Activated CD4-positive, alpha-beta memory T cell treated with anti-CD3 and anti-CD28 coated beads for 36 hours (primary cell): ENCODE measurements at regions of chr22 and their contacts with region 1.

Region 1: DNA sequence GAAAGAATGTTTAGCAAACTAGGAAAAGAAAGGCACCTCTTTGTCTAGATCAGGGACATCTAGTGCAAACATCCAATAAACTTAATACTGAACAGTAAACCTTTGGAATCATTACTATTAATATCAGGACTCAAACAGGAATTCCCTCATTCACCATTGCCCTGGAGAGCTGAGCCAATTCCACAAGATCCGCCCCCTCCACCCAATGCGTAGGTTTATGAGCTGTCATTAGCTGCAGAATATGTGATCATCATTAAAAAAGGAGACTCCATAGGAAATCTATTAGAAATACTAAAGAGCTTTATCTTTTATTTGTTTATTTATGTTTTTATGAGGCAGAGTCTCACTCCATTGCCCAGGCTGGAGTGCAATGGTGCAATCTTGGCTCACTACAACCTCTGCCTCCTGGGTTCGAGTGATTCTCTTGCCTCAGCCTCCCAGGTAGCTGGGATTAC is 5.5 kb downstream of the IL17REL start:
- DNase-seq: no peak
- H3K4me3 Mint-ChIP-seq: no peak overlapping the region
- H3K27ac Mint-ChIP-seq: no peak overlapping the region
- H3K4me1 Mint-ChIP-seq: peaks cover 27% of the 10 kb centered on the region
- H3K27me3 Mint-ChIP-seq: peaks cover 7% of the 10 kb centered on the region

Region 2: GRCh38 chr22:49800408-49801238 is 206.5 kb before region 1 on chr22:
- CTCF ChIA-PET with region 1: no interaction called
- POLR2A ChIA-PET with region 1: no interaction called
- intact Hi-C with region 1: no loop called
- DNase-seq: no peak
- H3K4me3 Mint-ChIP-seq: no peak overlapping the region
- H3K27ac Mint-ChIP-seq: no peak overlapping the region
- H3K4me1 Mint-ChIP-seq: peaks cover 33% of the 10 kb centered on the region
- H3K27me3 Mint-ChIP-seq: no peaks in the 10 kb centered on the region

Region 3: DNA sequence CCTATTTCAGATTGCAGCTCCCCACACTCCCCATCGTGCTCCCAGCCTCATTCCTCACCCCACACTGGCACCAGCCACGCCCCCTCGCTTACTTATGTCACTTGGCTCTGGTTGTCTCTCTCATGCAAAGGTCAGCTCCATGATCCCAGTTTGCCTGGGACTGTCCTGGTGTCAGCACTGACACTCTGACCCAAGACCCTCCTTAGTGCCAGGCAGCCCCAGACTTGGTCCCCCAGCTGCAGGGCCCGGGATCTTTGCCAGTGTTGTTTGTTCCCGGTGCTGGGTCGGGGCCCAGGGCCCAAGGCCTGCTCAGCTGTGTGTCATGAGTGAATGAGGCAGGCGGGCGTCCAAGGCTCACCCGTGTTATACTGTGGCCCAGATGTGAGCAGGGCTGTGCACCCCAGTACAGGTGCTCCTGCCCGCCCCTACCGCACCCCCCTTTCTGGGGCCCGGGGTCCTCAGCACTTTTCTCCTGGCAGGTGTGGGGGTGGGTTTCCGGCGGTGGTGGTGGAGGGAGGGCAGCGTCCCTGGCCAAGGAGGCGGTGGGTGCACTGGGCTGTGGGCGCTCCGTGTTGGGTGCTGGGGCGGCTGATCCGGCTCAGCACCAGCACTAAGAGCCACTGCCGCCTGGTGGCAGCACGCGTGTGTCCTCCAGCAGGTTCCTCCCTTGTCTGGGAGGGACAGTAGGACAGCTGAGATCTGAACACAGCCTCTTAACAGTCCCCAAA is 14.0 kb before region 1 on chr22:
- CTCF ChIA-PET with region 1: interaction called, 15 read pairs
- POLR2A ChIA-PET with region 1: interaction called, 3 read pairs
- intact Hi-C with region 1: no loop called
- DNase-seq: peak; percentile 83
- H3K4me3 Mint-ChIP-seq: no peak overlapping the region
- H3K27ac Mint-ChIP-seq: peak overlapping the region; percentile 6
- H3K4me1 Mint-ChIP-seq: peaks cover 4% of the 10 kb centered on the region
- H3K27me3 Mint-ChIP-seq: no peaks in the 10 kb centered on the region

Region 4: DNA sequence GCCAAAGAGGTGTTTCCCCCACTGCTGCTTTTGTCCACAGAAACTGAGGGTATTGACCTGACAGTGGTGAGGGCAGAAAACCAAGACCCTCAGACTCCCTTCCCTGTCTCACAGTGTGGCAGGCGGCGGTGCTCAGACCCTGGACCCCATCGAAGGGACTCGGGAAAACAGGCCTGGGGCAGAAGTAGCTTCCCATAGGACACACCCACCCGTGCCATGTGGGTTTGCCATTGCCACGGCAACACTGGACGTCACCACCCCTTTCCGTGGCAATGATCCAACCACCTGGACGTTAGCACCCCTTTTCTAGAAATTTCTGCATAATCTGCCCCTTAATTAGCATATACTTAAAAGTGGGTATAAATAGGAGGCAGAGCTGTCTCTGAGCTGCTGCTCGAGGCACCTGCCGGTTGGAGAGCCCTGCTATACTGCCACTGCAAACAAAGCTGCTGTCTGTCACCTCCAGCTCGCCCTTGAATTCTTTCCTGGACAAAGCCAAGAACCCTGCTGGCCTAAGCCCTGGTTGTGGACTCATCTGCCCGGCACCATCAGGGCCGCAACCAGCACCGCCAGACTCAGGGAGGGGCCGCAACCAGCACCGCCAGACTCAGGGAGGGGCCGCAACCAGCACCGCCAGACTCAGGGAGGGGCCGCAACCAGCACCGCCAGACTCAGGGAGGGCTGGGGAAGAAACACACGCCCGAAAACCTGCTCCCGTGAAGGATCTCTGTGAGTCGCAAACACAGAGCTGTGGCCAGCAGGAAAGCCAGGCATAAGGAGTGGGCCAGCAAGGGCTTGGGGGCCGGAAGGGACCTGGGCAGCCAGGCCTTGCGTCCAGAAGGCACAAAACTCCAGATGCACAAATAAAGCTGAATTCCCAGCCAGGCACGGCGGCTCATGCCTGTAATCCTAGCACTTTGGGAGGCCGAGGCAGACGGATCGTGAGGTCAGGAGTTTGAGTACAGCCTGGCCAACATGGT is 67.8 kb after region 1 on chr22:
- CTCF ChIA-PET with region 1: no interaction called
- POLR2A ChIA-PET with region 1: no interaction called
- intact Hi-C with region 1: no loop called
- DNase-seq: no peak
- H3K4me3 Mint-ChIP-seq: no peak overlapping the region
- H3K27ac Mint-ChIP-seq: no peak overlapping the region
- H3K4me1 Mint-ChIP-seq: no peaks in the 10 kb centered on the region
- H3K27me3 Mint-ChIP-seq: no peaks in the 10 kb centered on the region